ENCODE measurements at regions of chr17 and their contacts with region 1.

Region 1: DNA sequence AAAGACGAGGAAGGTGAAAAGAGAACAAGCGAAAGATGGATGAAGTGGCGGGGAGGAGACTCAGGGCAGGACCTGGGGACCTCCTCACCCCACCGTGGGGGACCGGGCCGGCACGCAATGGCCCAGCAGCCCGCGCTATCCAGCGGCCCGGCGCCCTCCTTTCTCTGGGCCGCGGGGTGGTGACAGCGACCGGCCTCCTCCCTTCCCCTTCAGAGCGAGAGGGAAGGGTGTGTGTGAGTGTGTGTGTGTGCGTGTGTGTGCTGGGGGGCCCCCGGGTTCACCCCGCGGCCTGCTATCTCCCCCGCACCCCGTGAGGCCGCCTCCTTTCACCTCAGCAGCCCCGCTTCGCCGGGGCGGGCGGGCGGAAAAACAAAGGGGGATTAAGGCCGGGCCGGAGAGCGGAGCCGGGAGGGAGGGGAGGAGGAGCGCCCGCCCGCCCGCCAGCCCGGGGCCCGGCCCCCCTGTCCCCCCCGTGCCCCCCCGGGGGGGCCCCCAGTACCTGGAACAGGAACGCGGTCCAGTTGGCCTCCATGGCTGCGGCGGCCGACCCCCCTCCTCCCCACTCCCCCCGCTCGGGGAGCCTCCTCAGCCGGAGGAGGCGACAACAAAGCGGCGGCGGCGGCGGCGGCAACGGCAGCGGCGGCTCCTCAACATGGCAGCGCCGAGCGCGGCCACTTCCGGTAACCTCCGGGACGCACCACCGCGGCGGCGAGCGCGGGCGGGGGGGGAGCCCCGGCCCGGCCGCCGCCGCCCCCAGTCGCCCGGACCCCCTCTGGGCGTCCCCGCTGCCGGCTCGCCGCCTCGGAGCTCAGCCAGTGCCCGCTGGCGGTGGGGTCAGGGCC is at the start of gene VEZF1:
- DNase-seq: peak; percentile 84 to 92 (median 89)
- ATAC-seq: peak; percentile 29 to 76 (median 73)
- H3K4me3 ChIP-seq: peak within 1 kb of the TSS; percentile 60 to 92 (median 86)
- H3K27ac ChIP-seq: peak within 1 kb of the TSS; percentile 91 to 99 (median 97)
- H3K4me1 ChIP-seq: peaks cover 0 to 78% (median 50%) of the 10 kb centered on the region in 12 donors
- H3K27me3 ChIP-seq: no peaks in the 10 kb centered on the region
- CTCF ChIP-seq: no peak
- POLR2A ChIP-seq: peak in 1 of 2 donors; percentile 27
- total RNA-seq, gene VEZF1: 58.9 to 85.6 (median 62.6) TPM

Region 2: GRCh38 chr17:57875309-57876115 is 112.3 kb before region 1 on chr17:
- intact Hi-C with region 1: loop called in 3 of 10 experiments (anchors 5 kb)
- DNase-seq: peak; percentile 84 to 89 (median 87)
- ATAC-seq: peak; percentile 82 to 90 (median 88)
- H3K4me3 ChIP-seq: peak overlapping the region in 5 of 12 donors; percentile 6 to 39 (median 29)
- H3K27ac ChIP-seq: peak overlapping the region; percentile 56 to 93 (median 86)
- H3K4me1 ChIP-seq: peaks cover 15 to 78% (median 54%) of the 10 kb centered on the region in 12 donors
- H3K27me3 ChIP-seq: no peaks in the 10 kb centered on the region
- CTCF ChIP-seq: peak; percentile 12 to 58 (median 40)
- POLR2A ChIP-seq: no peak

Region 3: DNA sequence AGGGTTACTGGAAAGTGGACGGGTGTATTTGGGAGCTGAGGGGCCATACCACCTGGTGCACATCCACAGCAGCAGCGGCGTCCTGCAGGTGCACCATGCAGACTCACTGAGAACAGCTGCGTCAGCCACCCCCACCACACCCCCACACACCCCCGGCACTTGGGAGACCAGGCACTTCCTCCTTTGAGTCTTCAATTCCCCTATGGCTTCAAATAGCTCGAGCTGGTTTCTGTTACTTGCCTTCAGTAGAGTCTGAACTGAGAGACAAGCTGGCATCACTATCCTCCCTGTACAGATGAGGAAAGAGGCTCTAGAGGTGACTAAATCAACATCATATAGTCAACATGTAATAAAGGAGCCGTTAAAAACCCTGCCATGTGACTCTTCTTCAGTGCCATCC is 48.0 kb before region 1 on chr17:
- intact Hi-C with region 1: loop called in 1 of 10 experiments (anchors 10 kb)
- DNase-seq: peak in 2 of 5 donors; percentile 47 to 64
- ATAC-seq: peak in 1 of 4 donors; percentile 5
- H3K4me3 ChIP-seq: no peak overlapping the region
- H3K27ac ChIP-seq: peak overlapping the region in 11 of 12 donors; percentile 44 to 100 (median 70)
- H3K4me1 ChIP-seq: peaks cover 34 to 99% (median 89%) of the 10 kb centered on the region in 12 donors
- H3K27me3 ChIP-seq: no peaks in the 10 kb centered on the region
- CTCF ChIP-seq: no peak
- POLR2A ChIP-seq: no peak

Region 4: GRCh38 chr17:57946798-57947358 is 40.9 kb before region 1 on chr17:
- intact Hi-C with region 1: loop called in 4 of 10 experiments (anchors 5 kb)
- DNase-seq: peak in 4 of 5 donors; percentile 42 to 61 (median 50)
- ATAC-seq: peak; percentile 69 to 80 (median 77)
- H3K4me3 ChIP-seq: peak overlapping the region in 11 of 12 donors; percentile 4 to 62 (median 47)
- H3K27ac ChIP-seq: peak overlapping the region; percentile 54 to 100 (median 90)
- H3K4me1 ChIP-seq: peaks cover 19 to 97% (median 86%) of the 10 kb centered on the region in 12 donors
- H3K27me3 ChIP-seq: no peaks in the 10 kb centered on the region
- CTCF ChIP-seq: no peak
- POLR2A ChIP-seq: no peak

Region 5: DNA sequence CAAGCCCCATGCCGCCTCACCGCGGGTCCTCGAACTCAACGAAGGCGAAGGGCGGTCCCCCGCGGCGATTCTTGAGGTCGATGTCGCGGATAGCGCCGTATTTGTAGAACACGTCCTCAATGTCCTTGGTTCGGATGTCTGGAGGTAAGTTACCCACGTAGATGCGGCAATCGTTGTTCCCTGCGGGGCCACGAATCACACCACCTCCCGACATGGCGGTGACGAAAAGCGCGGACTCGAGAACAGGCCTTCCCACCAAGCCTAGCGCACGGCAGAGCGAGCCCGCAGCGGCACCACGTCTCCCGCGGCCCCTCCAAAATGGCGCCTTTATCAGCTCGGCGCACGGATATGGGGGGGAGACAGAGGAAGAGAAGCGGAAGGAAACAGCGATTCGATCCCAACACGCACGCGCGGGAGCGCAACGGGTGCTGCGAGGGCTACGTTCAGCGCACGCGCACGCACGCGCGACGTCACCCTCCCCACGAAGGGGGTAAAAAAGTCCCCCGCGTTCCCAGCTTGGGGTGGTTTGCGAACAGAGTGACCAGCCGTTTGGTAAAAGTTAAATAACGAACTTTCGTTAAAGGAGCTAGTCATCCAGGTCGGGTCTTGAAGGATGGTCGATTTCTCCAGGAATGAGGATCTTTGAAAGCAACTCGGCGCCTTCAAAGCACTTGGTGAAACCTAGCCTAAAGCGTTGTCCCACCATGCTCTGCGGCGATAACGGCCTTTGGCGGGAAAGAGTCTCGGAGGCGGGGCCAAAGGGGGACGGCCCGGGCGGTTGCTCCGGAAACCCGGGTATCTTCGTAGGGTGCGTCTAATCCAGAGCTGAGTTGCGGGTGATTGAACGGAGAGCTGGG is 19.4 kb after region 1 on chr17 and contains the start of gene SRSF1:
- intact Hi-C with region 1: loop called in 1 of 10 experiments (anchors 2 kb)
- DNase-seq: peak; percentile 98 to 99 (median 98)
- ATAC-seq: peak; percentile 95 to 98 (median 96)
- H3K4me3 ChIP-seq: peak within 1 kb of the TSS; percentile 68 to 96 (median 78)
- H3K27ac ChIP-seq: peak within 1 kb of the TSS; percentile 92 to 99 (median 96)
- H3K4me1 ChIP-seq: peaks cover 16 to 49% (median 38%) of the 10 kb centered on the region in 12 donors
- H3K27me3 ChIP-seq: no peaks in the 10 kb centered on the region
- CTCF ChIP-seq: no peak
- POLR2A ChIP-seq: peak; percentile 74 to 92
- total RNA-seq, gene SRSF1: 80.8 to 114 (median 99.7) TPM

Region 6: GRCh38 chr17:58019039-58019438 is 31.2 kb after region 1 on chr17:
- intact Hi-C with region 1: no loop called
- DNase-seq: no peak
- ATAC-seq: no peak
- H3K4me3 ChIP-seq: no peak overlapping the region
- H3K27ac ChIP-seq: no peak overlapping the region
- H3K4me1 ChIP-seq: no peaks in the 10 kb centered on the region
- H3K27me3 ChIP-seq: peaks cover 0 to 7% (median 0%) of the 10 kb centered on the region in 9 donors
- CTCF ChIP-seq: no peak
- POLR2A ChIP-seq: no peak